ENCODE measurements at regions of chr5 and their contacts with region 1.

Region 1: DNA sequence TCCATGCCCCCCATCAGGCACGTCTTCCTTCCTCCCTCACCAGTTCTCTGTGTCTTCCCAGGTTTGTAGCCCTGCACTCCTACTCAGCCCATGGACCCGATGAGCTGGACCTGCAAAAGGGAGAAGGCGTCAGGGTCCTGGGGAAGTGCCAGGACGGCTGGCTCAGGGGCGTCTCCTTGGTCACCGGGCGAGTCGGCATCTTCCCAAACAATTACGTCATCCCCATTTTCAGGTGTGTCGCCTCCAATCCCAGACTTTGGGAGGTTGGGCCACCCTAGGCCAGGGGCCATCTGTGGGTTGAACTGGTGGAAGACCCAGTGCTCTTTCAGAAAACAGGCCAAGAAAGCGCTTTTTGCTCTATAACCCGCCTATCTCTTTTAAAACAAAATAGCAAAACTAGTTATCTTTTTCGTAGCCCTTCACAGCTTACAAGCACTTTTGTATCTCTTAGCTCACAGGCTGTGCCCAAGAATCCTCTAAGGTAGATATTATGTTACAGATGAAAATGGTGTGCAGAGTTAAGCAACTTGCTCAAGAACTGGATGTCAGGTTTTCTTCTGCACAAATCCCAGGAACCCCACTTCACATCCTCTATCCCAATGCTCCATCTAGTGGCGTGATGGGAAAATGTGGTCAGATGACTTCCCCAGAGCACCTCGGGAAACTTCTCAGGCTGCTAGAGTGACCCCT is 56.2 kb downstream of the PLAC8L1 start:
- DNase-seq: peak in 1 of 2 donors; percentile 56
- ATAC-seq: peak; percentile 46 to 75 (median 66)
- H3K4me3 ChIP-seq: no peak overlapping the region
- H3K27ac ChIP-seq: peak overlapping the region in 2 of 10 donors; percentile 17 to 46
- H3K4me1 ChIP-seq: peaks cover 0 to 12% (median 0%) of the 10 kb centered on the region in 9 donors
- H3K27me3 ChIP-seq: no peaks in the 10 kb centered on the region
- CTCF ChIP-seq: peak; percentile 41 to 81 (median 70)

Region 2: DNA sequence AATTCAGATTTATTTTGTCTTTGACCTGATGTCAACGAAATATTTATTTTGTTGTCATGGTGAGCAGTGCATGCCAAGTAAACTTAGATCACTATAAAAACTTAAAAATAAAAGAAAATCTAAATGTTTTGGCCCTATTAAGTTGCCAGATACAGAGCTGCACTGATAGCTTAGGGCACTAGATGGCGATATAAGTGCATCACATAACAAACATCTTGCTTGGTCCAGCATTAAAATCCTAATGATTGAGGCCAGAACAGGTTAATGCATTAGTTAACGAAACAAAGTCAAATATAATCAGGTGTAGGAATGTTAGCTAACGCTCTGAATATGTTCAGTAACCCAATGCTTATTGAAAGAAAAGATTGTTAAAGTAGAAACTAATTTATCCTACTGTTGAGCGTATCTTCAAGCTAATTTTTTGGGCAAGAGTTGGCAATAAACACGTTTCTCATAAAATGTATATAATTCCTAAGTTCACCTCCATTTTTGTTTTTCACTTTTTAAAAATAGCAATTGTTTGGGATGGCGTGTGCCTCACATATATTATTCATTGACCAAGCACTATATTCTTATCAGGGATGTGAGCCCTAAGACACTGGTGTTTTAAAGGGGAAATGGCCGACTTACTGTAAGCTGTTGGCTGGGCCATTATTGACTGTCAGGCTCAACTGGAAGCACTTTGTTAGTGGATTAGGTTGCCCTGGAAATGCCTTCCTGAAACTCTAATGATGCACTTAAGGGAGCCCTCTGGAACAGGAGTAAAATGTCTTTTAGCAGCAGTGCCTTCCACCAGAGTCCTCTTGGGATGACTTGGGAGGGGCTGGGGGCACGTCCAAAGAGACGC is 1845.2 kb before region 1 on chr5:
- intact Hi-C with region 1: loop called in 7 of 10 experiments (anchors 2 to 10 kb)
- DNase-seq: peak in 1 of 2 donors; percentile 41
- ATAC-seq: peak in 5 of 8 donors; percentile 46 to 69 (median 52)
- H3K4me3 ChIP-seq: no peak overlapping the region
- H3K27ac ChIP-seq: no peak overlapping the region
- H3K4me1 ChIP-seq: peaks cover 3 to 15% (median 8%) of the 10 kb centered on the region in 9 donors
- H3K27me3 ChIP-seq: peaks cover 0 to 95% (median 65%) of the 10 kb centered on the region in 7 donors
- CTCF ChIP-seq: peak; percentile 61 to 94 (median 87)

Region 3: GRCh38 chr5:145697251-145697990 is 351.7 kb before region 1 on chr5:
- intact Hi-C with region 1: loop called in 1 of 10 experiments (anchors 10 kb)
- DNase-seq: no peak
- ATAC-seq: no peak
- H3K4me3 ChIP-seq: no peak overlapping the region
- H3K27ac ChIP-seq: no peak overlapping the region
- H3K4me1 ChIP-seq: peaks cover 0 to 4% (median 0%) of the 10 kb centered on the region in 9 donors
- H3K27me3 ChIP-seq: no peaks in the 10 kb centered on the region
- CTCF ChIP-seq: peak in 8 of 9 donors; percentile 15 to 57 (median 43)

Region 4: GRCh38 chr5:145908205-145908945 is 140.8 kb before region 1 on chr5:
- intact Hi-C with region 1: loop called in 1 of 10 experiments (anchors 5 kb)
- DNase-seq: no peak
- ATAC-seq: no peak
- H3K4me3 ChIP-seq: no peak overlapping the region
- H3K27ac ChIP-seq: no peak overlapping the region
- H3K4me1 ChIP-seq: no peaks in the 10 kb centered on the region
- H3K27me3 ChIP-seq: no peaks in the 10 kb centered on the region
- CTCF ChIP-seq: peak in 3 of 9 donors; percentile 11 to 34 (median 32)

Region 5: GRCh38 chr5:145946112-145946861 is 102.9 kb before region 1 on chr5:
- intact Hi-C with region 1: loop called in 1 of 10 experiments (anchors 5 kb)
- DNase-seq: peak; percentile 23 to 32
- ATAC-seq: peak; percentile 70 to 91 (median 86)
- H3K4me3 ChIP-seq: no peak overlapping the region
- H3K27ac ChIP-seq: peak overlapping the region in 9 of 10 donors; percentile 4 to 62 (median 39)
- H3K4me1 ChIP-seq: peaks cover 0 to 39% (median 15%) of the 10 kb centered on the region in 9 donors
- H3K27me3 ChIP-seq: peaks cover 0 to 16% (median 0%) of the 10 kb centered on the region in 7 donors
- CTCF ChIP-seq: no peak

Region 6: GRCh38 chr5:146124580-146124979 is 75.4 kb after region 1 on chr5:
- intact Hi-C with region 1: loop called in 1 of 10 experiments (anchors 5 kb)
- DNase-seq: no peak
- ATAC-seq: no peak
- H3K4me3 ChIP-seq: no peak overlapping the region
- H3K27ac ChIP-seq: no peak overlapping the region
- H3K4me1 ChIP-seq: no peaks in the 10 kb centered on the region
- H3K27me3 ChIP-seq: no peaks in the 10 kb centered on the region
- CTCF ChIP-seq: no peak

Region 7: GRCh38 chr5:146490089-146490843 is 441.1 kb after region 1 on chr5:
- intact Hi-C with region 1: no loop called
- DNase-seq: no peak
- ATAC-seq: no peak
- H3K4me3 ChIP-seq: no peak overlapping the region
- H3K27ac ChIP-seq: no peak overlapping the region
- H3K4me1 ChIP-seq: peaks cover 0 to 1% (median 0%) of the 10 kb centered on the region in 9 donors
- H3K27me3 ChIP-seq: no peaks in the 10 kb centered on the region
- CTCF ChIP-seq: no peak

Region 8: GRCh38 chr5:147963948-147964693 is 1915.0 kb after region 1 on chr5:
- intact Hi-C with region 1: no loop called
- DNase-seq: peak; percentile 7 to 44
- ATAC-seq: peak; percentile 58 to 95 (median 91)
- H3K4me3 ChIP-seq: no peak overlapping the region
- H3K27ac ChIP-seq: peak overlapping the region; percentile 59 to 89 (median 74)
- H3K4me1 ChIP-seq: peaks cover 0 to 36% (median 15%) of the 10 kb centered on the region in 9 donors
- H3K27me3 ChIP-seq: peaks cover 0 to 2% (median 0%) of the 10 kb centered on the region in 7 donors
- CTCF ChIP-seq: no peak